ENCODE measurements at regions of chr7 and their contacts with region 1.

Region 1: DNA sequence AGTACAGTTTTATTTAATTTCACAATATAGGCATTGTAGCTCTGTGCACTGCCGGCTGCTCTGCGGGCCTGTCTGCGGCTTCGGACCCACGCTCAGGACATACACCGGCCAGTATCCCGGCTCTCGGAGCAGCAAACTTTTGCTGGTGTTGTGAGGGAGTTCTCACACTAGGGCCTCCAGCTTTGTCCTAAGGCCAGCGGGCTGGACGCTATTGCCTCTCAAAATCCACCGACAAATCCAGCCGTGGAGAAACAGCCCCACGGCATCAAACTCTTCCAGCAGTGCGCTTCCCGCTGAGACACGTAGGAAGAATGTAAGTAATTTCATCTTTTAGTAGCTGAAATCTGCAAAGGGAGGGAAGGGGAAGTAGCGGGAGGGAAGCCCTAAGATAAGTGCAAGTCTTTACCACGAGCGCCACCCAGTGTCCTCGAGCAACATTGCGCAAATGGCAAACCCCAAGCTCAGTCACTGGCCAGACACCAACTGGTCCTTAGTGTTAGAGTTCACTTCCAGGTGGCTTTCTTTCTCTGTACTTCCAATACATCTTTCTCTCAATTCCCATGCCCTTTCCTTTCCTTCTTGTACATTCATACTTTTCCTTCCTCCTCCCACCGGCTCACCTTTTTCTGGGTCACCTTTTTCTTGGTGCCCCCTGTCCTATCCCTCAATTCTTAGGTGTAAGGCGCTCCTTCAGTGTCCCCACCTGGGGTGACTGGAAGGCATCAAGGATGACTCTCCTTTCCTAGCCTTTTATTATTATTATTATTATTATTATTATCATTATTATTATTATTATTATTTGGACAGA is 3.0 kb upstream of the DLX5 start:
- DNase-seq: peak; percentile 78
- H3K4me3 Mint-ChIP-seq: peak overlapping the region; percentile 59
- H3K27ac Mint-ChIP-seq: no peak overlapping the region
- H3K4me1 Mint-ChIP-seq: peaks cover 8% of the 10 kb centered on the region
- H3K27me3 Mint-ChIP-seq: peaks cover 57% of the 10 kb centered on the region
- CTCF ChIP-seq: peak; percentile 95

Region 2: GRCh38 chr7:95916573-95917297 is 1110.9 kb before region 1 on chr7:
- CTCF ChIA-PET with region 1: interaction called, 18 read pairs
- POLR2A ChIA-PET with region 1: no interaction called
- intact Hi-C with region 1: loop called (anchors 1 kb)
- DNase-seq: peak; percentile 77
- H3K4me3 Mint-ChIP-seq: peak overlapping the region; percentile 24
- H3K27ac Mint-ChIP-seq: no peak overlapping the region
- H3K4me1 Mint-ChIP-seq: no peaks in the 10 kb centered on the region
- H3K27me3 Mint-ChIP-seq: peaks cover 83% of the 10 kb centered on the region
- CTCF ChIP-seq: peak; percentile 75

Region 3: GRCh38 chr7:96179837-96180236 is 847.8 kb before region 1 on chr7:
- CTCF ChIA-PET with region 1: interaction called, 13 read pairs
- POLR2A ChIA-PET with region 1: no interaction called
- intact Hi-C with region 1: loop called (anchors 1 kb)
- DNase-seq: no peak
- H3K4me3 Mint-ChIP-seq: no peak overlapping the region
- H3K27ac Mint-ChIP-seq: no peak overlapping the region
- H3K4me1 Mint-ChIP-seq: peaks cover 14% of the 10 kb centered on the region
- H3K27me3 Mint-ChIP-seq: no peaks in the 10 kb centered on the region
- CTCF ChIP-seq: peak; percentile 15

Region 4: DNA sequence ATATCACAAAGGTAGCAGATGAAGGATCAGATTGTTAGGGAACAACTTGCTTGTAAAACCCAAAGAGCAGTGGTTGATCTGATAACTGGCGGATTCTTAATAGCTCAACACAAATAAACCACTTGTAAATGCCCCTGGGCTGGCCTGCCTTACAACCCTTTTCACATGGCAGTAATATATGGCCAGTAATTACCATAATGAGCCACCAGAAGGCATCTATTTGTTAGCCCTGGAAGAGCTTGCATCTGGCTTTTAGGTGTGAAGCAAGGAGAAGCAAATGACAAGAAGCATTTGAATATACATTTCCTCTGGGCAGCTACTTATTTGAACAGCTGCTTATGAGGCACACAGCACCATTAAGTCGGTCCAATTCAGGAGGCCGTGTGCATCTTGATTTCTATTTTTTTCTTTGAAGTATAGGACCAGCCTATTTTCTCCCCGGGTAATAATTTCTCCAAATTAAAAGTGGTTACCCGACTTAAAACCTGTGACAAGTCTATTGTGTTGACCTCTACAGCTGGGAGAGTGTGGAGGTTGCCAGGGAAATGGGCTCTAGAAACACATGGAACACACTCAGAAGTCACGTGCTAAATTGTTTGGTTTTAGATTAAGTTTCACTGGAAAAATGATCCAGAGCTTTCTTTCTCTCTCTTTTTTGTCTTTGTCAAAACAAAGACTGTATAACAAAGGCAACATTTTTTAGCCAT is 431.4 kb before region 1 on chr7:
- CTCF ChIA-PET with region 1: interaction called, 12 read pairs
- POLR2A ChIA-PET with region 1: no interaction called
- intact Hi-C with region 1: loop called (anchors 1 kb)
- DNase-seq: peak; percentile 27
- H3K4me3 Mint-ChIP-seq: no peak overlapping the region
- H3K27ac Mint-ChIP-seq: no peak overlapping the region
- H3K4me1 Mint-ChIP-seq: no peaks in the 10 kb centered on the region
- H3K27me3 Mint-ChIP-seq: peaks cover 38% of the 10 kb centered on the region
- CTCF ChIP-seq: peak; percentile 23

Region 5: GRCh38 chr7:96778263-96778662 is 249.4 kb before region 1 on chr7:
- CTCF ChIA-PET with region 1: interaction called, 4 read pairs
- POLR2A ChIA-PET with region 1: no interaction called
- intact Hi-C with region 1: loop called (anchors 2 kb)
- DNase-seq: peak; percentile 32
- H3K4me3 Mint-ChIP-seq: no peak overlapping the region
- H3K27ac Mint-ChIP-seq: no peak overlapping the region
- H3K4me1 Mint-ChIP-seq: no peaks in the 10 kb centered on the region
- H3K27me3 Mint-ChIP-seq: peaks cover 30% of the 10 kb centered on the region
- CTCF ChIP-seq: peak; percentile 20

Region 6: GRCh38 chr7:96800824-96801223 is 226.8 kb before region 1 on chr7:
- CTCF ChIA-PET with region 1: no interaction called
- POLR2A ChIA-PET with region 1: no interaction called
- intact Hi-C with region 1: no loop called
- DNase-seq: peak; percentile 65
- H3K4me3 Mint-ChIP-seq: no peak overlapping the region
- H3K27ac Mint-ChIP-seq: no peak overlapping the region
- H3K4me1 Mint-ChIP-seq: peaks cover 15% of the 10 kb centered on the region
- H3K27me3 Mint-ChIP-seq: peaks cover 64% of the 10 kb centered on the region
- CTCF ChIP-seq: no peak

Region 7: DNA sequence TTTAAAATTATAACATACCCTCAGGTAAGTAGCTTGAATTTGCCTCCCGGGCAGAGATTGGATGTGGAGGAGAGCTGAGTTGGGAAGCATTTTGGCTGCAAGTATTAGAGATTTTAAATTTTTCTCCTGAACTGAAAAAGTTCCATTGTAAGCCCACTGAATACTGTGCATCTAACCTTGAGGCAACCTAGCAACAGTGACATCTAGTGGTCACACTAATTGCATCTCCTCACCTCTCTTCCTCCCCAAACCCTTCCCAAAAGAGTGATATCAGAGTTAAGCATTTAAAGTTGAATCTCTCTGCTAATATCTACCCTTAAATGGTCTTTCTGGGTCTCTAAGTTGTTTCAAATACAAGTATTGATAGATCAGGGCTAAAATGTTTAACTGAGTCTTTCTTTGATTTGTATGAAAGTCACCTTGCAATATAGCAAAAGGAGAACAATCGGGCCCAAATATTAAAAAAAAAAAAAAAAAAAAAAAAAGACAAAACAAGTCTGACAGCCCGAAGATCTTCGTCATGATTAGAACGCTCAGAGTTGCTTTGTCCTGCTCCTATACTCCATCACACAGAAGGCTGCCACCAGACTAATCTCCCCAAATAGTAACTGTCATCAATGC is 37.4 kb after region 1 on chr7:
- CTCF ChIA-PET with region 1: interaction called, 10 read pairs
- POLR2A ChIA-PET with region 1: no interaction called
- intact Hi-C with region 1: no loop called
- DNase-seq: peak; percentile 67
- H3K4me3 Mint-ChIP-seq: no peak overlapping the region
- H3K27ac Mint-ChIP-seq: no peak overlapping the region
- H3K4me1 Mint-ChIP-seq: no peaks in the 10 kb centered on the region
- H3K27me3 Mint-ChIP-seq: peaks cover 50% of the 10 kb centered on the region
- CTCF ChIP-seq: peak; percentile 70